CD8-positive, alpha-beta T cell (primary cell): ENCODE measurements at regions of chr3 and their contacts with region 1.

Region 1: DNA sequence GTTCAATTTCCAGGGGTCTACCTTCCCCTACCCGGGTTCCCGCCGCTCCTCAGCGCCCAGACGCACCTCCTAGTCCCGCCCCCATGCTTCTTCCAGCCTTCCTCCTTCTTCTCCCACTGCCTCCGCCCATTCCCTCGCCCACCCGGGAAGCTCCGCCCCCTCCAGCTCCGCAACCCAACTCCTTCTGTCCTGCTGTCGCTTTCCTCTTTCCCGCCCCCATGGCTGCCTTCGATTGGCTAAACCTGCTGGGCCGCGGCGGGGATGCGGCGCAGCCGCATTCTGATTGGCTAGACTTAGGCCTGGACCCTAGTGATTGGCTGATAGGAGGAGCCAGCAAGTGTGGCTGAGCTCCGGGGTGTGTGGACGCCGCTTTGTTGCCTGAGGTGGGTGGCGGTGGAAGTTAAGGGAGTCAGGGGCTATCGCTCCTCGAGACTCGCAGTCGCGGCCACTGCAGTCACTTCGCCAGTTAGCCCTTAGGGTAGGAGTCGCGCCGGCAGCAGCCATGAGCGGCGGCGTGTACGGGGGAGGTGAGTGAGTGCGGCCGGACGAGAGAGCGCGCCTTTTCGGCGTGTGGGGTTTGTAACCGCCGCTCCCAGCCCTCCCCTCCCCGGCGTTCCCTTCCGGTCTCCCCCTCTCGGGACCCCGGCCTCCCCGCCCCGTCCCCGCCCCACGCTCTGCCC is at the start of gene ACTL6A:
- DNase-seq: peak; percentile 95 to 99 (median 98)
- ATAC-seq: peak; percentile 90
- H3K4me3 ChIP-seq: peak within 1 kb of the TSS; percentile 71 to 92
- H3K4me3 Mint-ChIP-seq: peak within 1 kb of the TSS; percentile 99
- H3K27ac ChIP-seq: peak within 1 kb of the TSS; percentile 51 to 66
- H3K27ac Mint-ChIP-seq: peak within 1 kb of the TSS; percentile 96
- H3K4me1 ChIP-seq: peaks cover 16% of the 10 kb centered on the region
- H3K4me1 Mint-ChIP-seq: peaks cover 31% of the 10 kb centered on the region
- H3K27me3 ChIP-seq: no peaks in the 10 kb centered on the region
- H3K27me3 Mint-ChIP-seq: peaks cover 3% of the 10 kb centered on the region
- CTCF ChIP-seq: no peak
- total RNA-seq, gene ACTL6A: 18.2 to 18.7 TPM

Region 2: GRCh38 chr3:179015551-179016020 is 547.1 kb before region 1 on chr3:
- CTCF ChIA-PET with region 1: interaction called, 4 read pairs
- POLR2A ChIA-PET with region 1: no interaction called
- intact Hi-C with region 1: loop called (anchors 1 to 2 kb)
- DNase-seq: peak; percentile 26 to 87 (median 59)
- ATAC-seq: peak; percentile 98
- H3K4me3 ChIP-seq: no peak overlapping the region
- H3K4me3 Mint-ChIP-seq: no peak overlapping the region
- H3K27ac ChIP-seq: no peak overlapping the region
- H3K27ac Mint-ChIP-seq: no peak overlapping the region
- H3K4me1 ChIP-seq: peaks cover 3% of the 10 kb centered on the region
- H3K4me1 Mint-ChIP-seq: peaks cover 18% of the 10 kb centered on the region
- H3K27me3 ChIP-seq: no peaks in the 10 kb centered on the region
- H3K27me3 Mint-ChIP-seq: no peaks in the 10 kb centered on the region
- CTCF ChIP-seq: peak; percentile 84

Region 3: GRCh38 chr3:179108086-179108485 is 454.6 kb before region 1 on chr3:
- CTCF ChIA-PET with region 1: no interaction called
- POLR2A ChIA-PET with region 1: no interaction called
- intact Hi-C with region 1: loop called in 1 of 2 experiments (anchors 1 kb)
- DNase-seq: no peak
- ATAC-seq: no peak
- H3K4me3 ChIP-seq: no peak overlapping the region
- H3K4me3 Mint-ChIP-seq: no peak overlapping the region
- H3K27ac ChIP-seq: no peak overlapping the region
- H3K27ac Mint-ChIP-seq: no peak overlapping the region
- H3K4me1 ChIP-seq: no peaks in the 10 kb centered on the region
- H3K4me1 Mint-ChIP-seq: peaks cover 1% of the 10 kb centered on the region
- H3K27me3 ChIP-seq: no peaks in the 10 kb centered on the region
- H3K27me3 Mint-ChIP-seq: peaks cover 4% of the 10 kb centered on the region
- CTCF ChIP-seq: no peak

Region 4: DNA sequence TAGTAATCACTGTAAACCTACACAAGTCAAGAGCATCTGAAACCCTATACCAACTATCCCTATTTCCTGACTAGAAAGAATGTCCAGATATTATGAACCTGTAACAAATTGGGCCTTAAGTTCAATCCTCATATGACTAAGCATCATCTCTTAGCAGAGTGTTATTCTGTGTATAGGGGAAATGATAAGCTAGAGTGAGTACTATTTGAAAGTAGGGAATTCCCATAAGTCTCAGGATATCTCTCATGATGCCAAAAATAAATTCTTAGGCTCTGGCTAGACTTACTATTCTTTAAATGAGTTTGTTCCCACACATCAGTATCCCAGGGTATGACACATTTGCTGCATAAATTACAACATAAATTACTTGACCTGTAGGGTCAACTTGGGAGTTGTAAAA is 26.4 kb after region 1 on chr3:
- CTCF ChIA-PET with region 1: no interaction called
- POLR2A ChIA-PET with region 1: no interaction called
- intact Hi-C with region 1: loop called in 1 of 2 experiments (anchors 2 kb)
- DNase-seq: no peak
- ATAC-seq: no peak
- H3K4me3 ChIP-seq: no peak overlapping the region
- H3K4me3 Mint-ChIP-seq: no peak overlapping the region
- H3K27ac ChIP-seq: no peak overlapping the region
- H3K27ac Mint-ChIP-seq: no peak overlapping the region
- H3K4me1 ChIP-seq: no peaks in the 10 kb centered on the region
- H3K4me1 Mint-ChIP-seq: no peaks in the 10 kb centered on the region
- H3K27me3 ChIP-seq: no peaks in the 10 kb centered on the region
- H3K27me3 Mint-ChIP-seq: no peaks in the 10 kb centered on the region
- CTCF ChIP-seq: no peak

Region 5: DNA sequence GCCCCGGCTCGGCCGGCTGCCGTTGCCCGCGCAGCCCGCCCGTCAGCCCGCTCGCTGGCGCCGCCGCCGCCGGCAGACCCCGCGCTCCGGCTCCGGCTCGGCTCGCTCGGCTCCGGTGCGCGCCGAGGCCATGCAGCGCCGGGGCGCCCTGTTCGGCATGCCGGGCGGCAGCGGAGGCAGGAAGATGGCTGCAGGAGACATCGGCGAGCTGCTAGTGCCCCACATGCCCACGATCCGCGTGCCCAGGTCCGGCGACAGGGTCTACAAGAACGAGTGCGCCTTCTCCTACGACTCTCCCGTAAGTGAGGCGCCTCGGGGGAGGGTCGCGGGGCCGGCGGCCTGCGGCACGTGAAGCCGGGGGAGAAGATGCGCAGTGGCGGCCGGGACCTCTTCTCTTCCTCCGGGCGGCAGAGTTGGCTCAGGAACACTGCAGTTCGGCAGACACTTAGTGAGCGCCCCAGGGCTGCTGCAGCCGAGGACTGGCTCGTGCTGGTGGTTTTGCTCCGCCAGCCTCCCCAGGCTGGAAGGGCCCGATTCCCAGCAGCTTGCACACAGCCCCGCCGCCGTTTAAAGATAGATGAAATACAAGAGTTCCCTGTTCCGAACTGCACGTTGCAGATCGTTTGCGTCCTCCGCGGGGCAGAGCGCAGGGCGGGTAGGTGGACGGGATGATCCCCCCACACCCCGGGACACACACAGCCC is 90.5 kb after region 1 on chr3:
- CTCF ChIA-PET with region 1: interaction called, 5 read pairs
- POLR2A ChIA-PET with region 1: interaction called, 5 read pairs
- intact Hi-C with region 1: loop called (anchors 1 to 2 kb)
- DNase-seq: peak; percentile 15 to 79 (median 64)
- ATAC-seq: peak; percentile 62
- H3K4me3 ChIP-seq: peak overlapping the region; percentile 78 to 93
- H3K4me3 Mint-ChIP-seq: peak overlapping the region; percentile 92
- H3K27ac ChIP-seq: peak overlapping the region; percentile 67 to 69
- H3K27ac Mint-ChIP-seq: peak overlapping the region; percentile 90
- H3K4me1 ChIP-seq: peaks cover 6% of the 10 kb centered on the region
- H3K4me1 Mint-ChIP-seq: peaks cover 31% of the 10 kb centered on the region
- H3K27me3 ChIP-seq: no peaks in the 10 kb centered on the region
- H3K27me3 Mint-ChIP-seq: no peaks in the 10 kb centered on the region
- CTCF ChIP-seq: no peak

Region 6: GRCh38 chr3:179768080-179768479 is 205.3 kb after region 1 on chr3:
- CTCF ChIA-PET with region 1: no interaction called
- POLR2A ChIA-PET with region 1: no interaction called
- intact Hi-C with region 1: no loop called
- DNase-seq: no peak
- ATAC-seq: no peak
- H3K4me3 ChIP-seq: no peak overlapping the region
- H3K4me3 Mint-ChIP-seq: no peak overlapping the region
- H3K27ac ChIP-seq: no peak overlapping the region
- H3K27ac Mint-ChIP-seq: no peak overlapping the region
- H3K4me1 ChIP-seq: no peaks in the 10 kb centered on the region
- H3K4me1 Mint-ChIP-seq: peaks cover 1% of the 10 kb centered on the region
- H3K27me3 ChIP-seq: no peaks in the 10 kb centered on the region
- H3K27me3 Mint-ChIP-seq: no peaks in the 10 kb centered on the region
- CTCF ChIP-seq: no peak

Region 7: GRCh38 chr3:180912304-180913296 is 1349.9 kb after region 1 on chr3 and contains the start of gene FXR1:
- CTCF ChIA-PET with region 1: no interaction called
- POLR2A ChIA-PET with region 1: no interaction called
- intact Hi-C with region 1: loop called in 1 of 2 experiments (anchors 5 kb)
- DNase-seq: peak; percentile 76 to 94 (median 90)
- ATAC-seq: peak; percentile 84
- H3K4me3 ChIP-seq: peak within 1 kb of the TSS; percentile 96 to 98
- H3K4me3 Mint-ChIP-seq: peak within 1 kb of the TSS; percentile 97
- H3K27ac ChIP-seq: peak within 1 kb of the TSS; percentile 93 to 95
- H3K27ac Mint-ChIP-seq: peak within 1 kb of the TSS; percentile 96
- H3K4me1 ChIP-seq: peaks cover 47% of the 10 kb centered on the region
- H3K4me1 Mint-ChIP-seq: peaks cover 72% of the 10 kb centered on the region
- H3K27me3 ChIP-seq: no peaks in the 10 kb centered on the region
- H3K27me3 Mint-ChIP-seq: no peaks in the 10 kb centered on the region
- CTCF ChIP-seq: no peak
- total RNA-seq, gene FXR1: 192 to 206 TPM